Caco-2 (cell line): ENCODE measurements at regions of chr20 and their contacts with region 1.

Region 1: GRCh38 chr20:54649511-54649962 is 174.1 kb downstream of the DOK5 start:
- DNase-seq: peak; percentile 91 to 92
- H3K4me3 ChIP-seq: no peak overlapping the region
- H3K4me3 Mint-ChIP-seq: no peak overlapping the region
- H3K27ac Mint-ChIP-seq: no peak overlapping the region
- H3K4me1 ChIP-seq: peaks cover 7% of the 10 kb centered on the region
- H3K4me1 Mint-ChIP-seq: no peaks in the 10 kb centered on the region
- H3K27me3 ChIP-seq: no peaks in the 10 kb centered on the region
- H3K27me3 Mint-ChIP-seq: peaks cover 3% of the 10 kb centered on the region
- CTCF ChIP-seq: peak; percentile 98 to 99

Region 2: DNA sequence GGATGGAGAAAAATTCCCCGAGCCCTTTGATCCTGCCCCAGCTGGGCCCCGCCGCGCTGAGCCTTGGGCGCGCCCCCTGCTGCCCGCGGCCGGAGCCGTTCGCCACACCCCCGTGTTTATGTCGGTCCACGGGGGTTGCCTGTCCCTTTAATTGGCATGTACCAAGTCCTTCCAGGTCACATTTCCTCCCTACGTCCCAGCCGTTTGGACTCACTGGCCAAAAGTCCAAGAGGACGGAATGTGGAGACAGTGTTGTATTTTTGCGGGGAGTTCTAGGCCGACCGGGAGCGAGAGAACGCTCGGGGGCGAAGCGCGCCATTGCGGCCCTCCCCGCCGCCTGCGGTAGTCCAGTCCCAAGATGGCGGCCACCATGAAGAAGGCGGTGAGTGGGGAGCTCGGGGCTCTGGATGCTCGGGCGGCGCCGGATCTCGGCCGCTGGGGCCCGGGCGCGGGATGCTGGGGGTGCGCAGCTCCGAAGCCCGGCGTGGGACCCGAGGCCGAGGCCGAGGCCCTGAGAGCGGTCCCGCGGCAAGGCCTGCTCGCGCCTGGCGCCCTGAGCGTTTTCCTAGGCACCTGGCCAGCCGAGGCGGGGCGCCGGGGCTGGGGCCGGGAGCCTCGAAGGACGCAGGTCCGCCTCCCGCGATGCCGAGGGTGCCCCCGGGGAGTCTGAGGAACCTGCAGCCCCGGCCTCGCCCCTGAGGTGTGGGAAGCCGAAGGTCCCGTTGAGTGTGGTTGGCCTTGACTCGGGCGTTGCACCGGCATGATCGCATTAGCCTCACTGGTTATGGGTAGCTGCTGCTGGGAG is 441.6 kb before region 1 on chr20 and contains the start of gene PFDN4:
- CTCF ChIA-PET with region 1: interaction called, 11 read pairs
- POLR2A ChIA-PET with region 1: no interaction called
- intact Hi-C with region 1: no loop called
- DNase-seq: peak; percentile 96 to 99
- H3K4me3 ChIP-seq: peak within 1 kb of the TSS; percentile 93
- H3K4me3 Mint-ChIP-seq: peak within 1 kb of the TSS; percentile 70
- H3K27ac Mint-ChIP-seq: peak within 1 kb of the TSS; percentile 99
- H3K4me1 ChIP-seq: peaks cover 9% of the 10 kb centered on the region
- H3K4me1 Mint-ChIP-seq: peaks cover 6% of the 10 kb centered on the region
- H3K27me3 ChIP-seq: no peaks in the 10 kb centered on the region
- H3K27me3 Mint-ChIP-seq: no peaks in the 10 kb centered on the region
- CTCF ChIP-seq: peak; percentile 95 to 98
- total RNA-seq, gene PFDN4: 86.7 and 93.4 TPM in 2 replicates

Region 3: GRCh38 chr20:54479138-54479865 is 170.2 kb before region 1 on chr20:
- CTCF ChIA-PET with region 1: no interaction called
- POLR2A ChIA-PET with region 1: no interaction called
- intact Hi-C with region 1: loop called (anchors 1 kb)
- DNase-seq: peak in 1 of 2 experiments; percentile 49
- H3K4me3 ChIP-seq: no peak overlapping the region
- H3K4me3 Mint-ChIP-seq: no peak overlapping the region
- H3K27ac Mint-ChIP-seq: no peak overlapping the region
- H3K4me1 ChIP-seq: no peaks in the 10 kb centered on the region
- H3K4me1 Mint-ChIP-seq: no peaks in the 10 kb centered on the region
- H3K27me3 ChIP-seq: no peaks in the 10 kb centered on the region
- H3K27me3 Mint-ChIP-seq: peaks cover 13% of the 10 kb centered on the region
- CTCF ChIP-seq: peak; percentile 72 to 73

Region 4: GRCh38 chr20:54668271-54669039 is 18.9 kb after region 1 on chr20:
- CTCF ChIA-PET with region 1: no interaction called
- POLR2A ChIA-PET with region 1: no interaction called
- intact Hi-C with region 1: loop called (anchors 1 kb)
- DNase-seq: peak in 1 of 2 experiments; percentile 68
- H3K4me3 ChIP-seq: no peak overlapping the region
- H3K4me3 Mint-ChIP-seq: no peak overlapping the region
- H3K27ac Mint-ChIP-seq: no peak overlapping the region
- H3K4me1 ChIP-seq: peaks cover 3% of the 10 kb centered on the region; the same call in 1 of the 2 replicates
- H3K4me1 Mint-ChIP-seq: no peaks in the 10 kb centered on the region
- H3K27me3 ChIP-seq: no peaks in the 10 kb centered on the region
- H3K27me3 Mint-ChIP-seq: no peaks in the 10 kb centered on the region
- CTCF ChIP-seq: peak; percentile 85 to 90

Region 5: DNA sequence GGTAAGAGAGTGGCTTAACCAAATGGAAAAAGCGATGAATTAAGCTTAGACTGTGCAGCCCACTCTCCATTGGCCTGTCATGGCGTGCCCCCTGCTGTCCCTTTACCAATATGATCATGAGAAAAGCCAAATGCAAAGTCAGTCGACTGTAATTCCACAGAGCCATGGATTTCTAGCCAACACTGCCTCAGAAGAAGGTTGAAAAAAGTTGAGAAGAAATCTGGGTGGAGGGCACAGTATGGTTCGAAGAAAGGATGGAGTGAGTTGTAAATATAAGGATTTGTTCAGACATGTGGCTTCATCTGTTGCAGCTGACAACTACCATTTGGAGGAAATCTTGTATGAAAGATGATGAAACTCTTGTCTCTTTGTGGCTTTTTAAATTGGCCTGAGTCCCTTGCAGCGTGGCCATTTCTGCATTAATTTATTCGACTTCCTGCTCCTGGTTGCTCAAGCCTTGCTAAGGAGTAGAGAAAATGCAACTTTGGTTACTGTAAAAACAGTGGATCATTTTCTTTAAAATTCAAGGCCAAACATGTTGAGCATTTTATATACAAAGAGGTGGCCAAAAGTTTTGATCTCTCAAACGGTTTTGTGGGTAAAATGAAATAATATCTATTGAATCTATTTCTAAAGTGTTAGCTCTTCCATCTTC is 77.4 kb after region 1 on chr20:
- CTCF ChIA-PET with region 1: interaction called, 6 read pairs
- POLR2A ChIA-PET with region 1: no interaction called
- intact Hi-C with region 1: loop called (anchors 1 kb)
- DNase-seq: peak in 1 of 2 experiments; percentile 55
- H3K4me3 ChIP-seq: no peak overlapping the region
- H3K4me3 Mint-ChIP-seq: no peak overlapping the region
- H3K27ac Mint-ChIP-seq: no peak overlapping the region
- H3K4me1 ChIP-seq: no peaks in the 10 kb centered on the region
- H3K4me1 Mint-ChIP-seq: no peaks in the 10 kb centered on the region
- H3K27me3 ChIP-seq: no peaks in the 10 kb centered on the region
- H3K27me3 Mint-ChIP-seq: peaks cover 19% of the 10 kb centered on the region
- CTCF ChIP-seq: peak; percentile 52 to 67

Region 6: DNA sequence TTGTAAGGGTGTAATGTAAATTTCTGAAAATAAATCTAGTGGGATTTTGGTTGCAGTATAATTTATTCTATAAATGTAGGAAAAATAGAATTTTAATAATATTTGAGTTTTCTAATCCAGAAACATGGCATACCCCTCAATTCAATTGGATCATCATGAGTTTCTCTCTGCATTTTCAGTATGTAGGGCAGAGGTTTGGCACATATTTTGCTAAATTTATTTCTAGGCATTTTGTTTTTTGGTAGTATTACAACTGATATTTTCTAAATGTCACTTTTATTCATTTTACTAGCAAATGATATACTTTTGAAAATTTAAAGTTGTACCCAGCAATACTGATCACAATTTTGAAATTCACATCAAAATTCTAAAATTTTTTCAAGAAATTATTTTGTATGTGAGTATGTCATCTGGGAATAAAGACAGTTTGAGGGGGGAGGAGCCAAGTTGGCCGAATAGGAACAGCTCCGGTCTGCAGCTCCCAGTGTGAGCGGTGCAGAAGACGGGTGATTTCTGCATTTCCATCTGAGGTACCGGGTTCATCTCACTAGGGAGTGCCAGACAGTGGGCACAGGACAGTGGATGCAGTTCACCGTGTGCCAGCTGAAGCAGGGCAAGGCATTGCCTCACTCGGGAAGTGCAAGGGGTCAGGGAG is 132.7 kb after region 1 on chr20:
- CTCF ChIA-PET with region 1: no interaction called
- POLR2A ChIA-PET with region 1: no interaction called
- intact Hi-C with region 1: no loop called
- DNase-seq: no peak
- H3K4me3 ChIP-seq: no peak overlapping the region
- H3K4me3 Mint-ChIP-seq: peak overlapping the region; percentile 37
- H3K27ac Mint-ChIP-seq: no peak overlapping the region
- H3K4me1 ChIP-seq: no peaks in the 10 kb centered on the region
- H3K4me1 Mint-ChIP-seq: peaks cover 4% of the 10 kb centered on the region
- H3K27me3 ChIP-seq: no peaks in the 10 kb centered on the region
- H3K27me3 Mint-ChIP-seq: peaks cover 3% of the 10 kb centered on the region
- CTCF ChIP-seq: no peak